CD8-positive, alpha-beta T cell (primary cell): ENCODE measurements at regions of chr15 and their contacts with region 1.

Region 1: DNA sequence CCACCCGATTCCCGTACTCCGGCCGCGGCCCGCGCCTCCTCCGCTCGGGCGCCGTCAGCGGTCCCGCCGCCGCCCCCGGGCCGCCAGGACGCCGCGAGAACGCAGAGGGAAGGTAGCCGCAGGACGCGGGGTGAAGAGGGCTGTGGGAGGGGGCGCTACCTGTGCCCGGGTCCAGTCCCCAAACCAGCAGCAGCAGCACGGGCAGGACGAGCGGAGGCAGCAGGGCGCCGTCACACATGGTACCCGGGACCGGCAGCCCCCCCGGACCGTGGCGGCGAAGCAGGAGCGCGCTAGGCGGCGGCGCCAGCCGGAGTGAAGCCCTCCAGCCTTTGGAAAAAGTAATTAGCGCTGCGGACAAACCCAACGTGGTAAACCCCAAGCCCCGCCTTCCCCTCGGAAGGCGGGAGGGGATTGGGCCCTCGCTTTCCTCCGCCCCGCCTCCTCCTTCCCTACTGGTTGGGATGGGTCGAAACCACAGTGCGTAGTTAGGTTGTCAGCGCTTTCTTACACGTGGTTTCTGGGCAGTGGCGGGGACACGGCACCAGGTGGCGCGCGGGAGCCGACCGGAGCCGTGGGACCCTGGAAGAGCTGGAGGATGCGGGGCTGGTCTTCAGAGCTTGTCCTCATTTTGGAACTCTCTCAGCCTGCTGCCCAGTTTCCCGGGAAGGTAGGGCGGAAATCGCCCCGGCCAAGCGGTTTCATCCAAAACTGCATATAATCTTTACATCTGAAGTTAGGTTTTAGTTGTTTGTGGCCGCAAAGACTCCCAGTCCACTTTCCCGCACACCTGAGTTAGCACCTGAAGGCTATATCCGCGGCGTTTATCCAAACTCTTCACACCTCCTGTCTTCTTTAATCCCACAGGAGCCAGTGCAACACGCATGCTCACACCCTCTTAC is at the start of gene ADAMTS17:
- DNase-seq: peak; percentile 90 to 98 (median 95)
- ATAC-seq: peak; percentile 94
- H3K4me3 ChIP-seq: peak within 1 kb of the TSS; percentile 54 to 80
- H3K4me3 Mint-ChIP-seq: peak within 1 kb of the TSS; percentile 80
- H3K27ac ChIP-seq: peak within 1 kb of the TSS in 1 of 2 experiments; percentile 47
- H3K27ac Mint-ChIP-seq: peak within 1 kb of the TSS; percentile 22
- H3K4me1 ChIP-seq: peaks cover 12% of the 10 kb centered on the region
- H3K4me1 Mint-ChIP-seq: peaks cover 23% of the 10 kb centered on the region
- H3K27me3 ChIP-seq: no peaks in the 10 kb centered on the region
- H3K27me3 Mint-ChIP-seq: no peaks in the 10 kb centered on the region
- CTCF ChIP-seq: peak; percentile 94
- total RNA-seq, gene ADAMTS17: 15.3 to 18.0 TPM

Region 2: GRCh38 chr15:99275525-99276128 is 1066.3 kb before region 1 on chr15:
- CTCF ChIA-PET with region 1: interaction called, 3 read pairs
- POLR2A ChIA-PET with region 1: no interaction called
- intact Hi-C with region 1: loop called in 1 of 2 experiments (anchors 10 kb)
- DNase-seq: no peak
- ATAC-seq: no peak
- H3K4me3 ChIP-seq: no peak overlapping the region
- H3K4me3 Mint-ChIP-seq: no peak overlapping the region
- H3K27ac ChIP-seq: no peak overlapping the region
- H3K27ac Mint-ChIP-seq: no peak overlapping the region
- H3K4me1 ChIP-seq: no peaks in the 10 kb centered on the region
- H3K4me1 Mint-ChIP-seq: peaks cover 13% of the 10 kb centered on the region
- H3K27me3 ChIP-seq: no peaks in the 10 kb centered on the region
- H3K27me3 Mint-ChIP-seq: no peaks in the 10 kb centered on the region
- CTCF ChIP-seq: no peak

Region 3: DNA sequence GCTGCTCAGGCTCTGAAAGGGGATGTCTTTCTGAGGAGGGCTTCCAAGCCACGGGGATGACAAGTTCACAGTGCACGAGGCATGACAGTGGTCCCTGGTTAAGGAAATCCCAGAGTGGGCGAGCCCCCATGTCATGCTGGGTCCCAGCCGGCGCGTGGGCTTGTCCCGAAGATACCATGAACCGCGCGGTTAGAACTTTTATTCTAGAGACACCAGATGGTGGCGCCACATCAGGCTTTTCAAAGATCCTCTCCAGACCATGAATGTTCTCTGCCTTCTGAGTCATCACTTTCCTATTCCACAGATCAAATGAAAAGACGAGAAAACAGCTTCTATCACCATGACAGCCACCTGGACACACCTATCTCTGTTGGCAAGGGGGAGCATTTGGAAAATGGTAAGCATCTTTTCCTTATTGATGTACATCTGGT is 380.9 kb before region 1 on chr15:
- CTCF ChIA-PET with region 1: interaction called, 13 read pairs
- POLR2A ChIA-PET with region 1: no interaction called
- intact Hi-C with region 1: no loop called
- DNase-seq: peak in 3 of 9 experiments; percentile 11 to 29 (median 26)
- ATAC-seq: no peak
- H3K4me3 ChIP-seq: no peak overlapping the region
- H3K4me3 Mint-ChIP-seq: no peak overlapping the region
- H3K27ac ChIP-seq: no peak overlapping the region
- H3K27ac Mint-ChIP-seq: no peak overlapping the region
- H3K4me1 ChIP-seq: no peaks in the 10 kb centered on the region
- H3K4me1 Mint-ChIP-seq: peaks cover 9% of the 10 kb centered on the region
- H3K27me3 ChIP-seq: no peaks in the 10 kb centered on the region
- H3K27me3 Mint-ChIP-seq: peaks cover 11% of the 10 kb centered on the region
- CTCF ChIP-seq: no peak

Region 4: DNA sequence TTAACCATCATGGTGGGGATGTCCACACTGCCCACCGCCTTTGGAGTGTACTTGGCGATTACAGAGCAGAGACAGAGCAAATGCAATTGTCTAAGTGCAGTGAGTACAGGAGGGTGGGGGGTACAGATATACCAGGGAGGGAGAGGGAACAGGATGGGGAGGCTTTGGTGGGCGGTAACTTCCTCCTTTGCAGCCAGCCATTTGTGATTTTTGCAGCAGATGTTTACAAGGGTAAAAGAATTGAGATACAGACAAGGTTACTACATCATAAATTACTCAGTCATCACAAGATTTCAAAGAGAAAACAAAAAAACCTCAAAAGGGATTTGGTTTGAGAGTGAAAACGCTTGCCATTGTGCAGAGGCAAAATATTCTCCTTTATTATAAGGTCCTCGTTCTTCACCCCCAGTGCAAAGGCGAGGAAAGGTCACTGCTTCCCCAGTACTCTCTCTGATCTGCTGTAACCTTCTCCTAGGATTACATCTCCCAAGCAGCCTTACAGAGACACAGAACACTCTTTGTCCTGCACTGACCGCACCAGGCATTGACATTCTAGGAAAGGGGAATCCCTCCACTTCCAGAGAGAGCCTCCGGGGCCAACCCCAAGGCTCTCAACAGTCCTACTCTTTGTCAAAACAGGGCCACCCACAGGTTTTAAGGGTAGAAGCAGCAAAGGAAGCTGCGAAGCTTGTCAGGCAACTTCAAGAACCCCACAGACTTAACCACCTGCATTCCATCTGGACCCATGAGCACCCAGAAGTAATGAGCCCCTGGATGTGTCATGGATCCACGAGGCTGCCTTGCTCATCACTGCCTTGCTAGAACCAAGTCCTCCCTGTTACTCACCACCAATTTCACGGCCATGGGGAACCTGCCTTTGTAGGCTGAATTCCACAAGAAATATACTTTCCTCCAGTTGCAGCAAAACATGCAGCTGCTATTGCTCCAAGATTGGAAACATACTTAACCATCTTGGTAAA is 117.4 kb before region 1 on chr15:
- CTCF ChIA-PET with region 1: interaction called, 3 read pairs
- POLR2A ChIA-PET with region 1: no interaction called
- intact Hi-C with region 1: loop called (anchors 5 to 10 kb)
- DNase-seq: peak in 2 of 9 experiments; percentile 51 to 52
- ATAC-seq: peak; percentile 91
- H3K4me3 ChIP-seq: no peak overlapping the region
- H3K4me3 Mint-ChIP-seq: peak overlapping the region; percentile 26
- H3K27ac ChIP-seq: peak overlapping the region; percentile 8 to 32
- H3K27ac Mint-ChIP-seq: peak overlapping the region; percentile 88
- H3K4me1 ChIP-seq: peaks cover 26% of the 10 kb centered on the region
- H3K4me1 Mint-ChIP-seq: peaks cover 30% of the 10 kb centered on the region
- H3K27me3 ChIP-seq: no peaks in the 10 kb centered on the region
- H3K27me3 Mint-ChIP-seq: no peaks in the 10 kb centered on the region
- CTCF ChIP-seq: no peak

Region 5: DNA sequence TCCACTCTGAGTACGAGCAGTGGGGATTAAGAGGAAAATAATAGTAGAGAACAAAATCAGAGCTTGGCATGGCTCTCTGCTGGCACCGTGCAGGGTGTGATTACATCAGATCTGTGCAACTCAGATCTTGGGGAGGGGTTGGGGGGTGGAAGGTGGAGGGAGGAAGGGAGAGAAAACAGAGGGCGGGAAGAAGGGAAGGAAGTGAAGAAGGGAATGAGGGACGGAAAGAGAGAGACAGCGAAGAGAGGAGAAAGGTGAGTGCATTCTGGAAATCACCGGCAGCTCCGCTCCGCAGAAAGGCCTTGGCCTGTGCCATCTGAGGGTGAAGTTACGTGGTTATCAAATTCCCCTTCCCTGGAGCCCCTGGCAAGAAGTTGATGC is 30.8 kb after region 1 on chr15:
- CTCF ChIA-PET with region 1: no interaction called
- POLR2A ChIA-PET with region 1: no interaction called
- intact Hi-C with region 1: no loop called
- DNase-seq: peak in 1 of 9 experiments; percentile 23
- ATAC-seq: no peak
- H3K4me3 ChIP-seq: peak overlapping the region in 1 of 2 experiments; percentile 15
- H3K4me3 Mint-ChIP-seq: peak overlapping the region; percentile 1
- H3K27ac ChIP-seq: no peak overlapping the region
- H3K27ac Mint-ChIP-seq: no peak overlapping the region
- H3K4me1 ChIP-seq: no peaks in the 10 kb centered on the region
- H3K4me1 Mint-ChIP-seq: peaks cover 11% of the 10 kb centered on the region
- H3K27me3 ChIP-seq: peaks cover 3 to 12% of the 10 kb centered on the region in 2 experiments
- H3K27me3 Mint-ChIP-seq: peaks cover 47% of the 10 kb centered on the region
- CTCF ChIP-seq: no peak

Region 6: GRCh38 chr15:100383302-100384107 is 41.6 kb after region 1 on chr15:
- CTCF ChIA-PET with region 1: interaction called, 33 read pairs
- POLR2A ChIA-PET with region 1: no interaction called
- intact Hi-C with region 1: loop called (anchors 1 kb)
- DNase-seq: peak in 2 of 9 experiments; percentile 48 to 56
- ATAC-seq: no peak
- H3K4me3 ChIP-seq: no peak overlapping the region
- H3K4me3 Mint-ChIP-seq: no peak overlapping the region
- H3K27ac ChIP-seq: no peak overlapping the region
- H3K27ac Mint-ChIP-seq: no peak overlapping the region
- H3K4me1 ChIP-seq: no peaks in the 10 kb centered on the region
- H3K4me1 Mint-ChIP-seq: no peaks in the 10 kb centered on the region
- H3K27me3 ChIP-seq: no peaks in the 10 kb centered on the region
- H3K27me3 Mint-ChIP-seq: peaks cover 8% of the 10 kb centered on the region
- CTCF ChIP-seq: no peak

Region 7: GRCh38 chr15:100544290-100544945 is 202.5 kb after region 1 on chr15:
- CTCF ChIA-PET with region 1: no interaction called
- POLR2A ChIA-PET with region 1: no interaction called
- intact Hi-C with region 1: no loop called
- DNase-seq: no peak
- ATAC-seq: no peak
- H3K4me3 ChIP-seq: peak overlapping the region in 1 of 2 experiments; percentile 11
- H3K4me3 Mint-ChIP-seq: no peak overlapping the region
- H3K27ac ChIP-seq: no peak overlapping the region
- H3K27ac Mint-ChIP-seq: no peak overlapping the region
- H3K4me1 ChIP-seq: peaks cover 16% of the 10 kb centered on the region
- H3K4me1 Mint-ChIP-seq: peaks cover 15% of the 10 kb centered on the region
- H3K27me3 ChIP-seq: peaks cover 0 to 2% of the 10 kb centered on the region in 2 experiments
- H3K27me3 Mint-ChIP-seq: peaks cover 3% of the 10 kb centered on the region
- CTCF ChIP-seq: no peak

Region 8: GRCh38 chr15:100602064-100602822 is 260.3 kb after region 1 on chr15 and contains the starts of genes ASB7 and LINS1:
- CTCF ChIA-PET with region 1: interaction called, 8 read pairs
- POLR2A ChIA-PET with region 1: interaction called, 5 read pairs
- intact Hi-C with region 1: loop called in 1 of 2 experiments (anchors 5 kb)
- DNase-seq: peak; percentile 99 to 100 (median 100)
- ATAC-seq: peak; percentile 89
- H3K4me3 ChIP-seq: peak within 1 kb of the TSS; percentile 90 to 95
- H3K4me3 Mint-ChIP-seq: no peak within 1 kb of the TSS
- H3K27ac ChIP-seq: peak within 1 kb of the TSS; percentile 71 to 94
- H3K27ac Mint-ChIP-seq: peak within 1 kb of the TSS; percentile 93
- H3K4me1 ChIP-seq: peaks cover 58% of the 10 kb centered on the region
- H3K4me1 Mint-ChIP-seq: peaks cover 64% of the 10 kb centered on the region
- H3K27me3 ChIP-seq: no peaks in the 10 kb centered on the region
- H3K27me3 Mint-ChIP-seq: no peaks in the 10 kb centered on the region
- CTCF ChIP-seq: no peak
- total RNA-seq, gene ASB7: 17.2 to 19.9 TPM
- total RNA-seq, gene LINS1: 42.8 to 45.9 TPM

Region 9: DNA sequence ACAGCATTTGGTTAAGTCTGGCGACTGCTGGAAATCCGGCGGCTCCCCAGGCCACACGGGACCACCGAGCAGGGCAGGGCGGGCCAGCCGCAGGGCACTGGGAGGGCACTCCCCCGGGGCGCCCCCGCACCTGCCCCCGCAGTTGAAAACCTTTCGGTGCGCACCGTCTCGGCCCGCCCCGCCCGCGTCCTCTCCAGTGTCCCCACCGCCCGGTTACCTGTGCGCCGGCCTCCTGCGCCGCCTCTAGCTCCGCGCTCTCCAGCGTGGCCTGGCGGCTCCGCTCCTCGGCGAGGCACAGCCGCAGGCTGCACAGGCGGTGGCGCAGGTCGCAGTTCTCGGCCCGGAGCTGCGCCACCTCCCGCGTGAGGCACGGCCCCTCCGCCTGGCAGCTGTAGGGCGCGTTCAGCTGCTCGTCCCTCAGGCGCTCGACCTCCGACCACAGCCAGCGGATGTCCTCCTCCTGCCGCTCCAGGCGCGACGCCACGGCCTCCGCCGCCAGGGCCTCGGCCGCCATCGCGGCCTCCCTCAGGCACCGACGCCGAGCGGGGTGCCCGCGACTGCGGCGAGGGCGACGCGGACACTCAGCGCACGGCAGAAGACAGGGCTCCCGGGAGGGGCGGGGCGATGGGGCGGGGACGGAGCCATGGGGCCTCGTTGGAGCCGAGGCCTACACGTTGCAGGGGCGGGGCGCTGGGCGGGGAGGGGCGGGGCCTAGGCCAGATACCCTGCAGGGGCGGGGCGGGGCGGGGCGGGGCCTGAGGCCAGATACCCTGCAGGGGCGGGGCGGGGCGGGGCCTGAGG is 1382.2 kb after region 1 on chr15 and contains the start of gene TARS3:
- CTCF ChIA-PET with region 1: no interaction called
- POLR2A ChIA-PET with region 1: no interaction called
- intact Hi-C with region 1: loop called (anchors 5 to 10 kb)
- DNase-seq: peak; percentile 94 to 98 (median 96)
- ATAC-seq: peak; percentile 93
- H3K4me3 ChIP-seq: peak within 1 kb of the TSS; percentile 40 to 71
- H3K4me3 Mint-ChIP-seq: peak within 1 kb of the TSS; percentile 90
- H3K27ac ChIP-seq: peak within 1 kb of the TSS; percentile 65 to 87
- H3K27ac Mint-ChIP-seq: peak within 1 kb of the TSS; percentile 90
- H3K4me1 ChIP-seq: peaks cover 18% of the 10 kb centered on the region
- H3K4me1 Mint-ChIP-seq: peaks cover 35% of the 10 kb centered on the region
- H3K27me3 ChIP-seq: no peaks in the 10 kb centered on the region
- H3K27me3 Mint-ChIP-seq: no peaks in the 10 kb centered on the region
- CTCF ChIP-seq: no peak
- total RNA-seq, gene TARS3: 12.7 to 13.7 TPM